ENCODE measurements at regions of chr3 and their contacts with region 1.

Region 1: GRCh38 chr3:50568947-50569749 is at the start of gene HEMK1:
- DNase-seq: peak; percentile 92 to 95 (median 92)
- H3K4me3 ChIP-seq: peak within 1 kb of the TSS; percentile 92
- H3K4me3 Mint-ChIP-seq: peak within 1 kb of the TSS; percentile 90 to 97 (median 95)
- H3K27ac ChIP-seq: peak within 1 kb of the TSS; percentile 82
- H3K27ac Mint-ChIP-seq: peak within 1 kb of the TSS; percentile 91 to 98 (median 96)
- H3K4me1 ChIP-seq: peaks cover 67% of the 10 kb centered on the region
- H3K4me1 Mint-ChIP-seq: peaks cover 54 to 85% (median 58%) of the 10 kb centered on the region in 3 donors
- H3K27me3 ChIP-seq: no peaks in the 10 kb centered on the region
- H3K27me3 Mint-ChIP-seq: peaks cover 0 to 4% of the 10 kb centered on the region in 2 donors
- total RNA-seq, gene HEMK1: 51.8 to 55.0 TPM

Region 2: DNA sequence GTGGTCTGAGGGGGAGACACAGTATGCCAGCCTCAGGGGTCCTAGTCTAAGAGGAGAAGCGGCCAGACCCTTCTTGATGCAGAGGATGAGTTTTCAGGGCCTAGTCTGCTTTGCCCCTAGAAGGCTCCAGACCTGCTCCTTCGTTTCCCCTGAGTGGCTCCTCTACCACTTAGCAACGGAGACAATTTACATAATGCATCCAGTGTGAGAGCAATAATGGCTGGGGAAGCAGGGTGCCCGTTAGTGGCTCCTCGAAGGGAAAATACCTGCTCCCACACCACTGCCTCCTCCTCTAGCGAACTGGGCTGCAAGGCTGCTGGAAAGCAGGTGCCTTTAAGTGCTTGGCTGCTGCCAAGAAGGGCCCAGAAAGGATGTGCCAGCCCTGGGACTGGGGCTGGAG is 104.6 kb before region 1 on chr3:
- CTCF ChIA-PET with region 1: no interaction called
- POLR2A ChIA-PET with region 1: no interaction called
- DNase-seq: no peak
- H3K4me3 ChIP-seq: no peak overlapping the region
- H3K4me3 Mint-ChIP-seq: no peak overlapping the region
- H3K27ac ChIP-seq: no peak overlapping the region
- H3K27ac Mint-ChIP-seq: peak overlapping the region in 1 of 8 donors; percentile 47
- H3K4me1 ChIP-seq: peaks cover 4% of the 10 kb centered on the region
- H3K4me1 Mint-ChIP-seq: peaks cover 6% of the 10 kb centered on the region in 3 donors
- H3K27me3 ChIP-seq: no peaks in the 10 kb centered on the region
- H3K27me3 Mint-ChIP-seq: no peaks in the 10 kb centered on the region

Region 3: DNA sequence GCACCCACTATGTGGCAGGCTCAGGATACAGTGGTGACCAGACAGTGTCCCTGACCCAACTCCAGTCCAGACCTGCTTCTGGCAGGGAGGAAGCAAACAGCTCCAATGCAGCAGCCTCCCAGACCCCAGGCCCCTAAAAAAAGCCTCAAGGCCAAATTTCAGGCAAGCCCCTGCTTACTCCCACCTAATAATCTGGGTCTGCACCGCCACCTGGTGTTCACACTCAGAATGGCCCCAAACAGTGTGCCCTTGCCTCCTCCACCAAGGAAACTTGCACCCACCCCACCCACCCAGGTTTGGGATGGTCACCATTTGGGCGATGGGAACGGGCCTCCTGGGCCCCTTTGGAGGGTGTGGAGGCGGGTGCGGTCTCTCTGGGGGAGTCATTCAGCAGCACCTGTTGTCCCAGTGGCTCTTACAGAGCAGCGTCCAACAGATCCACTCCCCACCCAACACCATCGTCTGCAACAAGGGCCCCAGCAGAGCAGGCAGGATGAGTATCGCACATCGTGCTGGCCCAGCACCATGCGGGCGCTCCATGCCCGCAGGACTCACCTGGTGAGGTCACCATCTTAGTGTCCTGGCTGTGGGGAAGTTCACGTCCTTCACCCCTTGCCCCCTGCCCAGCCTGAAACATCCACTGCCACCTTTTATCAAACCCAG is 18.9 kb before region 1 on chr3:
- CTCF ChIA-PET with region 1: no interaction called
- POLR2A ChIA-PET with region 1: no interaction called
- DNase-seq: peak; percentile 42 to 73 (median 52)
- H3K4me3 ChIP-seq: no peak overlapping the region
- H3K4me3 Mint-ChIP-seq: no peak overlapping the region
- H3K27ac ChIP-seq: no peak overlapping the region
- H3K27ac Mint-ChIP-seq: no peak overlapping the region
- H3K4me1 ChIP-seq: no peaks in the 10 kb centered on the region
- H3K4me1 Mint-ChIP-seq: no peaks in the 10 kb centered on the region
- H3K27me3 ChIP-seq: no peaks in the 10 kb centered on the region
- H3K27me3 Mint-ChIP-seq: no peaks in the 10 kb centered on the region

Region 4: GRCh38 chr3:50580683-50581458 is 11.7 kb after region 1 on chr3:
- CTCF ChIA-PET with region 1: interaction called, 176 read pairs
- POLR2A ChIA-PET with region 1: interaction called, 3 read pairs
- DNase-seq: no peak
- H3K4me3 ChIP-seq: no peak overlapping the region
- H3K4me3 Mint-ChIP-seq: no peak overlapping the region
- H3K27ac ChIP-seq: no peak overlapping the region
- H3K27ac Mint-ChIP-seq: peak overlapping the region in 5 of 8 donors; percentile 40 to 77 (median 66)
- H3K4me1 ChIP-seq: peaks cover 50% of the 10 kb centered on the region
- H3K4me1 Mint-ChIP-seq: peaks cover 32 to 66% (median 36%) of the 10 kb centered on the region in 3 donors
- H3K27me3 ChIP-seq: no peaks in the 10 kb centered on the region
- H3K27me3 Mint-ChIP-seq: no peaks in the 10 kb centered on the region

Region 5: GRCh38 chr3:50587806-50588758 is 18.9 kb after region 1 on chr3:
- CTCF ChIA-PET with region 1: interaction called, 176 read pairs
- POLR2A ChIA-PET with region 1: interaction called, 24 read pairs
- DNase-seq: peak in 4 of 5 donors; percentile 60 to 81 (median 64)
- H3K4me3 ChIP-seq: peak overlapping the region; percentile 9
- H3K4me3 Mint-ChIP-seq: peak overlapping the region; percentile 62 to 83 (median 72)
- H3K27ac ChIP-seq: peak overlapping the region; percentile 29
- H3K27ac Mint-ChIP-seq: peak overlapping the region; percentile 88 to 99 (median 94)
- H3K4me1 ChIP-seq: peaks cover 67% of the 10 kb centered on the region
- H3K4me1 Mint-ChIP-seq: peaks cover 54 to 72% (median 66%) of the 10 kb centered on the region in 3 donors
- H3K27me3 ChIP-seq: no peaks in the 10 kb centered on the region
- H3K27me3 Mint-ChIP-seq: no peaks in the 10 kb centered on the region

Region 6: DNA sequence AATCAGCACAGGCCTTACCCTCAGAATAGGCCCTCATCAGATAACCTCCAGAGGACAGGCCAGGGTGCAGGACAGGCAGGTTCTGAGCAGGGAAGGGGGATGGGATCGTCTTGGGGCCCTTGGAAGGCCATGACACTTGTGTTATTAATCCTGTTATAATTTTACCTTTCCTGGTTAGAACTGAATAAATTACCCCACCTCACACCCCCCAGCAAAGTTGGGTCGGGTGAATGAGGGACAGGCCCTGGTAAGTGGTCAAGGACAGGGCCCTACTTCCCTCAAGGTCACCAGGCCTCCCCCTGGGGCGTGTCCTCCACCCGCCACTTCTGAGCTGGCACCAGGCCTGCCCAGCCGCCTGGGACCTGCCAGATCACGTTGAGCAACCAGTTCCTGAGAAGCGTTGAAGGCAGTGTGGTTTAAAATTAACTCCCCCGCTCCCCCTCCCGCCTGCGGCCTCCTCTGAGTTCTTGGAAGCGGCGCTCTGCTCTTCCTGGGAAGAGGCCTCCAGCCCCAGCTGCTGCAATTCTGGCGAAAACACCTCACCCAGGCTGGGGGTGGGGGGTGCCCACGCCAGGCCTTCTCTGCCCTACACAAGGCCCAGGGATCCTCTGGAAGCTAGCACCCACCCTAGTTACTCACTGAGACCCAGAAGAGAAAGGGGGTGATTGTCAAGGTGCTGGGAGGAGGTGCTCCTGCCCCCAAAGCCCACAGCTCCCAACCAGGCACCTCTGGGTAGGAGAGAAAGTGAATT is 31.9 kb after region 1 on chr3:
- CTCF ChIA-PET with region 1: interaction called, 724 read pairs
- POLR2A ChIA-PET with region 1: interaction called, 14 read pairs
- DNase-seq: peak; percentile 52 to 79 (median 57)
- H3K4me3 ChIP-seq: peak overlapping the region; percentile 26
- H3K4me3 Mint-ChIP-seq: peak overlapping the region; percentile 48 to 81 (median 76)
- H3K27ac ChIP-seq: peak overlapping the region; percentile 84
- H3K27ac Mint-ChIP-seq: peak overlapping the region; percentile 90 to 98 (median 96)
- H3K4me1 ChIP-seq: peaks cover 79% of the 10 kb centered on the region
- H3K4me1 Mint-ChIP-seq: peaks cover 68 to 83% (median 78%) of the 10 kb centered on the region in 3 donors
- H3K27me3 ChIP-seq: no peaks in the 10 kb centered on the region
- H3K27me3 Mint-ChIP-seq: no peaks in the 10 kb centered on the region

Region 7: DNA sequence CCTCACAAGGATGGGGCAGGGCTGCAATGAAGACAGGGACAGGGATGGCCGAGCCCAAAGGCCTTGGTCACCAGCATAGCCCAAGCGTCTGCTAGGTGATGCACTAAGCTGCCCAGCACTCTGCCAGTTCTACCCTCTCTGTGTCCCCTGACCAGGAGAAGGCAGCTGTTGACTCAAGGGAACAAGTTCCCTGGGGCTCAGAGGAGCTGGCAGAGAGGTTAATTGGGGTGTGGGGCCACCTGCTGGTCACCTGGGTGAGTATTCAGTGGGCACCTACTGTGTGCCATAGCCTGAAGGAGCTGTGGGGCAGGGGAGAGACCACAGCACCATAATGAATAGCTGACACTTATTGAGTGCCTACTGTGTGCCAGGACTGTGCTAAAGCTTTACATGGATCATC is 83.6 kb after region 1 on chr3:
- CTCF ChIA-PET with region 1: interaction called, 22 read pairs
- POLR2A ChIA-PET with region 1: interaction called, 3 read pairs
- DNase-seq: peak in 4 of 5 donors; percentile 32 to 71 (median 42)
- H3K4me3 ChIP-seq: no peak overlapping the region
- H3K4me3 Mint-ChIP-seq: no peak overlapping the region
- H3K27ac ChIP-seq: no peak overlapping the region
- H3K27ac Mint-ChIP-seq: peak overlapping the region in 2 of 8 donors; percentile 47 to 49
- H3K4me1 ChIP-seq: peaks cover 3% of the 10 kb centered on the region
- H3K4me1 Mint-ChIP-seq: peaks cover 0 to 3% (median 0%) of the 10 kb centered on the region in 3 donors
- H3K27me3 ChIP-seq: no peaks in the 10 kb centered on the region
- H3K27me3 Mint-ChIP-seq: no peaks in the 10 kb centered on the region

Region 8: DNA sequence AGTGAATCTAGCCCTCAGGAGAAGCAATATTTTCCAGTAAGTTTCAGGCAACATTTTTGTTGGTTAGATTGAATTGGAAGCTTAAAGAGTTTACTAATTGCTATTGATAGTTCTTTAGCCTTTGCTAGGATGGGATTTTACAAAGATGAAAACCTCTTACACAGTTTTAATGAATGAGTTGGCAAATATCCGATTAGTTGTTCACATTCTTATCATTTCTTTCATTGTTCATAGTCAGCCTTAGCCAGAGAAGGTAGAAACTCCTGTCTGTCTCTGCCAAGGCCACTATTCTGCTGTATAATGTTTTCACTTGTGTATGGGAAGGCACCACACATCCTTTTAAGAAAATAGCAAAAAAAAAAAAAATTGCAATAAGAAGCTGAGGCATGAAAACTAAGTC is 593.9 kb after region 1 on chr3:
- CTCF ChIA-PET with region 1: no interaction called
- POLR2A ChIA-PET with region 1: interaction called, 10 read pairs
- DNase-seq: no peak
- H3K4me3 ChIP-seq: no peak overlapping the region
- H3K4me3 Mint-ChIP-seq: no peak overlapping the region
- H3K27ac ChIP-seq: no peak overlapping the region
- H3K27ac Mint-ChIP-seq: peak overlapping the region in 1 of 8 donors; percentile 19
- H3K4me1 ChIP-seq: no peaks in the 10 kb centered on the region
- H3K4me1 Mint-ChIP-seq: no peaks in the 10 kb centered on the region
- H3K27me3 ChIP-seq: no peaks in the 10 kb centered on the region
- H3K27me3 Mint-ChIP-seq: peaks cover 0 to 2% of the 10 kb centered on the region in 2 donors